B cell (primary cell): ENCODE measurements at regions of chr16 and their contacts with region 1.

Region 1: GRCh38 chr16:77236063-77236511 is 36.9 kb downstream of the SYCE1L start:
- DNase-seq: peak; percentile 88
- ATAC-seq: peak; percentile 99
- H3K4me3 ChIP-seq: peak overlapping the region in 1 of 5 experiments; percentile 15
- H3K4me3 Mint-ChIP-seq: peak overlapping the region; percentile 50
- H3K27ac ChIP-seq: no peak overlapping the region
- H3K27ac Mint-ChIP-seq: no peak overlapping the region
- H3K4me1 ChIP-seq: peaks cover 4% of the 10 kb centered on the region in 2 donors
- H3K4me1 Mint-ChIP-seq: peaks cover 6% of the 10 kb centered on the region
- H3K27me3 ChIP-seq: peaks cover 0 to 3% (median 1%) of the 10 kb centered on the region in 4 experiments
- H3K27me3 Mint-ChIP-seq: peaks cover 40% of the 10 kb centered on the region
- CTCF ChIP-seq: peak; percentile 99

Region 2: GRCh38 chr16:77211880-77212740 is 24.0 kb before region 1 on chr16:
- CTCF ChIA-PET with region 1: interaction called, 6 read pairs
- POLR2A ChIA-PET with region 1: no interaction called
- intact Hi-C with region 1: loop called (anchors 2 kb)
- DNase-seq: peak; percentile 81
- ATAC-seq: peak; percentile 78
- H3K4me3 ChIP-seq: peak overlapping the region; percentile 30 to 91 (median 81)
- H3K4me3 Mint-ChIP-seq: peak overlapping the region; percentile 87
- H3K27ac ChIP-seq: peak overlapping the region; percentile 48 to 65
- H3K27ac Mint-ChIP-seq: peak overlapping the region; percentile 82
- H3K4me1 ChIP-seq: peaks cover 4 to 14% of the 10 kb centered on the region in 2 donors
- H3K4me1 Mint-ChIP-seq: peaks cover 12% of the 10 kb centered on the region
- H3K27me3 ChIP-seq: no peaks in the 10 kb centered on the region
- H3K27me3 Mint-ChIP-seq: no peaks in the 10 kb centered on the region
- CTCF ChIP-seq: no peak

Region 3: DNA sequence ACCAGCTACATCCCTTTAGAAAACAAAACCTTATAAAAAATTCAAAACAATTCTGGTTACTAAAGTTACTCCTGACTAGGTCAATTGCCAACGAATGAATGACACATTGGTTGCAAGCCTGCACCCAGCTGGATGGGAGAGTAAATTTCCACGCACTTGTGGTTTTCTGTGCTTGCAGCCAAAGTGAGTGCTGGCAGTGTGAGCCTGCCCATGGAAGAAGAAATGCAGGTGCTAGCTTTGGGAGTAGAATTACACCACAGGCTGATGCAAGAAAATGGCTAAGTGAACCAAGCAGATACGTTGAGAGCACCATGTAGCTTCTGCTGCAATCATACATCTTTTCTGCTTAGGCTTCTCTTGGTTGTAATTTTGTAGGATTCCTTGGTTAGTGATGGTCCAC is 37.7 kb after region 1 on chr16:
- CTCF ChIA-PET with region 1: no interaction called
- POLR2A ChIA-PET with region 1: no interaction called
- intact Hi-C with region 1: no loop called
- DNase-seq: no peak
- ATAC-seq: no peak
- H3K4me3 ChIP-seq: no peak overlapping the region
- H3K4me3 Mint-ChIP-seq: no peak overlapping the region
- H3K27ac ChIP-seq: no peak overlapping the region
- H3K27ac Mint-ChIP-seq: no peak overlapping the region
- H3K4me1 ChIP-seq: no peaks in the 10 kb centered on the region
- H3K4me1 Mint-ChIP-seq: no peaks in the 10 kb centered on the region
- H3K27me3 ChIP-seq: peaks cover 0 to 3% (median 0%) of the 10 kb centered on the region in 4 experiments
- H3K27me3 Mint-ChIP-seq: peaks cover 15% of the 10 kb centered on the region
- CTCF ChIP-seq: no peak

Region 4: DNA sequence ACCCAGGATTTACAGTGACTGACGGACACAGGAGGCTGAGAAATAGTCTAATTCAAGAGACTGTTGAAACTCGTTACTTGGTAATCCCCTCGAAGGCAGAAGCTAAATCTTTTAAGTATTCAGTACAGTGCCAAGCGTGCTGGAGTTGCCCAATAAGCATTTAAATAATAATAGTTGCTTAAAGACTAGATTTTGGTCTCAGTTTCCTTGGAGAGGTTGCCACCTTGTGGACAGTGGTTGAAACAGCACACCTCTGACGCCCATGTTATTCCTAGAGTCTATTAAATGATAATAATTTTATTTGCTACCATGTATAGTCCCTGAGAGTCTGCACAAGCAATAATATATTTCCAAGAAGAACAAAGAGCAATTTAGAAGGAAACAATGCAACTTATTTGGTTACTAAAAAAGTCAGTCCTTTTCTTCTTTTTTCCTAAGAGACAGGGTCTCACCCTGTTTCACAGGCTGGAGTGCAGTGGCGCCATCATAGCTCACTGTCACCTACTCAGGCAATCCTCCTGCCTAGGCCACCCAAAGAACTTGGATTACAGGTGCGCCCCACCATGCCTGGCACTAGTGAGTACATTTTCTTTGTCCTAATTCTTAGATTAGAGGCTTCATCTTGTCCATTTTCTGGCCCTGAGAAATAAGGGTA is 348.2 kb after region 1 on chr16:
- CTCF ChIA-PET with region 1: interaction called, 142 read pairs
- POLR2A ChIA-PET with region 1: no interaction called
- intact Hi-C with region 1: no loop called
- DNase-seq: peak; percentile 59
- ATAC-seq: no peak
- H3K4me3 ChIP-seq: no peak overlapping the region
- H3K4me3 Mint-ChIP-seq: no peak overlapping the region
- H3K27ac ChIP-seq: no peak overlapping the region
- H3K27ac Mint-ChIP-seq: no peak overlapping the region
- H3K4me1 ChIP-seq: no peaks in the 10 kb centered on the region
- H3K4me1 Mint-ChIP-seq: no peaks in the 10 kb centered on the region
- H3K27me3 ChIP-seq: peaks cover 0 to 18% (median 4%) of the 10 kb centered on the region in 4 experiments
- H3K27me3 Mint-ChIP-seq: peaks cover 30% of the 10 kb centered on the region
- CTCF ChIP-seq: peak; percentile 94

Region 5: GRCh38 chr16:77971306-77972271 is 735.5 kb after region 1 on chr16:
- CTCF ChIA-PET with region 1: interaction called, 4 read pairs
- POLR2A ChIA-PET with region 1: no interaction called
- intact Hi-C with region 1: loop called (anchors 5 kb)
- DNase-seq: peak; percentile 73
- ATAC-seq: peak; percentile 31
- H3K4me3 ChIP-seq: no peak overlapping the region
- H3K4me3 Mint-ChIP-seq: no peak overlapping the region
- H3K27ac ChIP-seq: no peak overlapping the region
- H3K27ac Mint-ChIP-seq: no peak overlapping the region
- H3K4me1 ChIP-seq: no peaks in the 10 kb centered on the region
- H3K4me1 Mint-ChIP-seq: no peaks in the 10 kb centered on the region
- H3K27me3 ChIP-seq: no peaks in the 10 kb centered on the region
- H3K27me3 Mint-ChIP-seq: peaks cover 3% of the 10 kb centered on the region
- CTCF ChIP-seq: peak; percentile 78